Prostate gland (tissue), 2 donors: ENCODE measurements at regions of chr2 and their contacts with region 1.

Region 1: DNA sequence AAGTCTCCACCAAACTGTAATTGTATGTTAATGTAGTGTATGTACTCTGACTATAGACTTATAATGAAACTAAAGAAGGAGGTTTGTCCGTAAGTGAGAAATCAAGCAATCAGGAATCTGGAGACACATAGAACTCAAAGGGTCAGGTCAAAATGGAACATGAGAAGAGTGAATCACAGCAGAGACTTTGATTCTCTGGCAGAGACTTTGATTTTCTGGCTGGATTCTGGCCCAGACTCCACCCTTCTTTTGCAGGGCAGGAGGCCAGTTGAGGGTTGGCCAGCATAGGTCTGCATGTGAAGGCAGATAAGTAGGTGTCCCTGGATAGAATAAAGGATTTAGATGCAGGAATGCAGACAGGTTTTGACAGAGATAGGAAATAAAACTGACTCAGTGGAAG is 11.0 kb upstream of the NCKAP5 start:
- DNase-seq: peak; percentile 67
- H3K4me3 ChIP-seq: no peak overlapping the region
- H3K27ac ChIP-seq: no peak overlapping the region
- H3K4me1 ChIP-seq: no peaks in the 10 kb centered on the region
- H3K27me3 ChIP-seq: no peaks in the 10 kb centered on the region
- CTCF ChIP-seq: no peak
- POLR2A ChIP-seq: no peak

Region 2: GRCh38 chr2:133780099-133780839 is 201.0 kb after region 1 on chr2:
- intact Hi-C with region 1: loop called (anchors 10 kb)
- DNase-seq: peak; percentile 76
- H3K4me3 ChIP-seq: no peak overlapping the region
- H3K27ac ChIP-seq: no peak overlapping the region
- H3K4me1 ChIP-seq: no peaks in the 10 kb centered on the region
- H3K27me3 ChIP-seq: no peaks in the 10 kb centered on the region
- CTCF ChIP-seq: peak; percentile 44 to 81 (median 76)
- POLR2A ChIP-seq: no peak